ENCODE measurements at regions of chr12 and their contacts with region 1.

Region 1: GRCh38 chr12:75511116-75512048 is at the start of gene KRR1:
- DNase-seq: peak; percentile 95
- ATAC-seq: peak; percentile 97
- H3K4me3 Mint-ChIP-seq: peak within 1 kb of the TSS; percentile 99
- H3K27ac Mint-ChIP-seq: peak within 1 kb of the TSS; percentile 100
- H3K4me1 Mint-ChIP-seq: peaks cover 33% of the 10 kb centered on the region
- H3K27me3 Mint-ChIP-seq: no peaks in the 10 kb centered on the region
- CTCF ChIP-seq: no peak
- total RNA-seq, gene KRR1: 113 to 121 TPM

Region 2: DNA sequence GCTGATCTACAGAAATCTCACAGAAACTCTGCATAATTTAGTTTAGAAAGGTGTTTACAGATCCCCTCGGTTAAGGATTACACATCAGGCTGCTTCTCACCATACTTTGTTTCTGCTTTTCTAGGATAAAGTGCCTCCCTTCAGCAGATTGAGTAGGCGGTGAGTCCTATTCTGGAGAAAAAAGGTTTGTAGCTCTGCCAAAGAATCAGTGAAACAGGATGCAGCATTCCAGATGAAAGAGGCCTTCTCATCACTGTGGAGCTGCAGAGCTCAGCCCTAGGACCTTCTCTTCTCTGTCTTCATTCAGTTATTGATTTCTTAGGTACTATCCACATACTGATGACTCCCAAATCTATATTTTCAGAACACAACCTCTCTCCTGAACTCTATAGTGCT is 155.6 kb after region 1 on chr12:
- CTCF ChIA-PET with region 1: no interaction called
- POLR2A ChIA-PET with region 1: no interaction called
- intact Hi-C with region 1: no loop called
- DNase-seq: no peak
- ATAC-seq: no peak
- H3K4me3 Mint-ChIP-seq: no peak overlapping the region
- H3K27ac Mint-ChIP-seq: no peak overlapping the region
- H3K4me1 Mint-ChIP-seq: no peaks in the 10 kb centered on the region
- H3K27me3 Mint-ChIP-seq: peaks cover 7% of the 10 kb centered on the region
- CTCF ChIP-seq: no peak

Region 3: GRCh38 chr12:76037130-76038103 is 526.0 kb after region 1 on chr12:
- CTCF ChIA-PET with region 1: interaction called, 11 read pairs
- POLR2A ChIA-PET with region 1: interaction called, 9 read pairs
- intact Hi-C with region 1: loop called (anchors 1 kb)
- DNase-seq: peak; percentile 32
- ATAC-seq: peak; percentile 74
- H3K4me3 Mint-ChIP-seq: no peak overlapping the region
- H3K27ac Mint-ChIP-seq: no peak overlapping the region
- H3K4me1 Mint-ChIP-seq: peaks cover 37% of the 10 kb centered on the region
- H3K27me3 Mint-ChIP-seq: no peaks in the 10 kb centered on the region
- CTCF ChIP-seq: peak; percentile 77